ENCODE measurements at regions of chr2 and their contacts with region 1.

Region 1: DNA sequence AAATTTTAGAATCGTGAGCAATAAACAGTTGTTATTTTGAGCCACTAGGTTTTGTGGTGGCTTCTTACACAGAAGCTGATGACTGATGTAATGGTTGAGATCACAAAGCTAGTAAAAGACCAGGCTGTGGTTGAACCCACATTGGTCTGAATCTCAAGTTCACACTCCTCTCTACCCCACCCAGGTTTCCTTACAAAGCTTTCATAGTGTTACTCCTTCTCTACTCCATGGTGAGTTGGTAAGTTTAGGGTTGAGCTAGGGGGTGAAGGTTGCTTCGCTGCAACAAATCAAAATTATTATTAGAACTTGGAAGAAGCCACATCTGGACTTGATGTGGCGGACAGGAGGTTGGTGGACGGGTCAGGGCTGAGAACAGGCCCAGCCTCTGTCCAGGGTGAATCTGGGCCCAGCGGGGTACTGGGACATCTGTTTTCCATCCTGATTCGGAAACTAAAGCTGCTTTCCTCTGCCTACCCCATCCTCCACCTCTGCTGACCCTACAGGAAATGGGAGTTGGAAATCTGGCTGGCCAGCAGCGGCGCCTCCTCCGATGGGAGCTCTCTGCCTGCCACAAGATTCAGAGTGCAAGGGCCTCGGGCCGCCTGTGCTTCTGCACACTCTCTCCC is 86.3 kb downstream of the ZFP36L2 start:
- DNase-seq: peak; percentile 38
- ATAC-seq: peak; percentile 30
- H3K4me3 Mint-ChIP-seq: peak overlapping the region; percentile 5
- H3K27ac Mint-ChIP-seq: peak overlapping the region; percentile 62
- H3K4me1 Mint-ChIP-seq: peaks cover 72% of the 10 kb centered on the region
- H3K27me3 Mint-ChIP-seq: no peaks in the 10 kb centered on the region

Region 2: DNA sequence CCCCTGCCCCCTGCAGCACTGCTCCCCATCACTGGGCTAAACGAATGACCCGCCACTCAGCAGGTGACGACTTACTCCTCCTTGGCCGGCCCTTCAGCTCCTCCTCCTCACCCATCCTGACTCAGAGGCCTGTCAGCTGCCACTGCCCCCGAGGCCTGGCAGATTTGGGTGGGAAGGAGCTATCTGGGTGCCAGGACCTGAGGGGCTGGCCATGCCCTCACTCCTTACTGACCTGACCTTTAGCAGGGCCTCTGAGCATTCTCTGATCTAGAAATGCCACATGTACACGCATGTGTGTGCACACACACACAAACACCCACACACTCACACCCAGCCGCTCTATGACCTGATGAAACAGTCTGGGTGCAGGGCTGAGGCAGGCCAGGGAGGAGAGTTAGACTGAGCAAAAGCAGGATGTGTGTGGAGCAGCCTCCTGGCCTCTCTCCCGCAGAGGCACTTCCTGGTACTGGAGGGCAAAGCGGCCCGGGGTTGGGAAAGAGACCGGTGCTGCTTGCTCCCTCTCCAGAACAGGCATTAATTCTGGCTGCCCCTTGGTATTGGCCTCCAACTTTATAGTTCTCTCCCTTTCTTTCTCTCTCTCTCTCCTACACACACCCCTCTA is 18.3 kb after region 1 on chr2:
- CTCF ChIA-PET with region 1: interaction called, 3 read pairs
- POLR2A ChIA-PET with region 1: no interaction called
- intact Hi-C with region 1: loop called (anchors 1 kb)
- DNase-seq: peak; percentile 88
- ATAC-seq: peak; percentile 70
- H3K4me3 Mint-ChIP-seq: peak overlapping the region; percentile 63
- H3K27ac Mint-ChIP-seq: peak overlapping the region; percentile 96
- H3K4me1 Mint-ChIP-seq: peaks cover 60% of the 10 kb centered on the region
- H3K27me3 Mint-ChIP-seq: no peaks in the 10 kb centered on the region

Region 3: GRCh38 chr2:43178602-43179542 is 38.8 kb after region 1 on chr2:
- CTCF ChIA-PET with region 1: interaction called, 4 read pairs
- POLR2A ChIA-PET with region 1: interaction called, 9 read pairs
- intact Hi-C with region 1: loop called (anchors 1 kb)
- DNase-seq: peak; percentile 57
- ATAC-seq: peak; percentile 10
- H3K4me3 Mint-ChIP-seq: peak overlapping the region; percentile 16
- H3K27ac Mint-ChIP-seq: peak overlapping the region; percentile 90
- H3K4me1 Mint-ChIP-seq: peaks cover 69% of the 10 kb centered on the region
- H3K27me3 Mint-ChIP-seq: no peaks in the 10 kb centered on the region

Region 4: DNA sequence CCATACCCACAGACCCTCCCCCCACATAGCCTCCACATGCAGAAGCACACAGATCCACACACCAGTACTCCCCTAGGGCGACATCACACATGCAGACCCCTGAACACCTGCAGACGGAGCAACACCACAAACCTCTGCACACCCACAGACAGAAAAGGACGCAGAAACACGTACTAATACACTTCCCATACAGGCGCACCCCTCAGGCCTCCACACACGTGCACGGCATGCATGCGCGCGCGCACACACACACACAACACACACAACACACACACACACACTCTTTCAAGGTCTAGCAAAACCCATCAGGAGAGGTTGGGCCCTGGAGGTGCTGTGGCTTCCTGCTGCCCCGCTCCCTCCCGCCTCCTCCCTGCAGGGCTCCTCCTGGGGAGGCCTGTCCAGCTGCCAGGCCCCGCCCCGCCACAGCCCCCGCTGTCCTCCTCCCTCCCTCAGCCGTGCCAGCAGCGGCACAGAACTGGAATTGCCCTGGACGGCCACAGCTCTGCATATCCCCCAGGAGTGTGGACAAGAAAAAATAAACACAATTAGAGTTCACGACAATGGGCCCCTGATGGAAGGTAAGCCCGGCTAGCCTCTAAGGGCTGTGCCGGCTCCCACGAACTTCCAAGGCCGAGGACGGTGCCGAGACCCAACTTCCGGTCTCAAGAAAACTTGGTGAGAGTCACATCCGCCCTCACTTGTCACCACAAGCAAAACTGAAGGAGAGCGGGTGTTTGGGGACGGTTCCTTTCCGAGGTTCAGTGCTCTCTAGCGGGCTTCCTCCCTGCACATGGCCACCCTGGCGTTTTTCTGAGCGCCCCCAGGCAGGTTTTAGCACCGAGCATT is 79.5 kb after region 1 on chr2:
- CTCF ChIA-PET with region 1: interaction called, 24 read pairs
- POLR2A ChIA-PET with region 1: interaction called, 5 read pairs
- intact Hi-C with region 1: loop called in 1 of 2 experiments (anchors 1 kb)
- DNase-seq: peak; percentile 88
- ATAC-seq: peak; percentile 69
- H3K4me3 Mint-ChIP-seq: peak overlapping the region; percentile 83
- H3K27ac Mint-ChIP-seq: peak overlapping the region; percentile 98
- H3K4me1 Mint-ChIP-seq: peaks cover 46% of the 10 kb centered on the region
- H3K27me3 Mint-ChIP-seq: no peaks in the 10 kb centered on the region